Dendritic cell treated with granulocyte-macrophage colony-stimulating factor and Interleukin-4, amounts not matched to agents 40 ng/mL and 50 ng/mL, for 4 days (primary cell): ENCODE measurements at regions of chr5 and their contacts with region 1.

Region 1: GRCh38 chr5:90866333-90866732 is 307.7 kb downstream of the ADGRV1 start:
- H3K4me3 Mint-ChIP-seq: no peak overlapping the region
- H3K27ac Mint-ChIP-seq: no peak overlapping the region
- H3K4me1 Mint-ChIP-seq: no peaks in the 10 kb centered on the region
- H3K27me3 Mint-ChIP-seq: no peaks in the 10 kb centered on the region

Region 2: DNA sequence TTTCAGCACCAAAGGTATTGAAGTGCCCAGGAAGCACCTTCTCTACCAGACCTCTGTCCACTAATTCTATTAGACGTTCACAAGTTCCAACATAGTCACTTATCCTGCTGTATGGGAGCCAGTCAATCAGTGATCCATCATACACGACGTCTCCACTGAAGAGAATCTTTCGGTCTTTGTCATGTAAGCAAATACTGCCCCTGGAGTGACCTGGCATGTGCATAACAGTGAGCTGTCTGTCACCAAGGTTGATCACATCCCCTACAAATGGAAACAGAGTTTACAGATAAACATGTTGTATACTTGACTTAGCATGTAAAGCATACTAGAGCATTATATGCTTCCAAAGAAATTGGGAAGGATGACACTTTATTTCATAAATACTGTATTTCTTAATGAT is 405.0 kb before region 1 on chr5:
- intact Hi-C with region 1: no loop called
- H3K4me3 Mint-ChIP-seq: no peak overlapping the region
- H3K27ac Mint-ChIP-seq: no peak overlapping the region
- H3K4me1 Mint-ChIP-seq: no peaks in the 10 kb centered on the region
- H3K27me3 Mint-ChIP-seq: no peaks in the 10 kb centered on the region

Region 3: GRCh38 chr5:90932052-90932699 is 65.8 kb after region 1 on chr5:
- intact Hi-C with region 1: loop called (anchors 2 kb)
- H3K4me3 Mint-ChIP-seq: no peak overlapping the region
- H3K27ac Mint-ChIP-seq: no peak overlapping the region
- H3K4me1 Mint-ChIP-seq: no peaks in the 10 kb centered on the region
- H3K27me3 Mint-ChIP-seq: peaks cover 3% of the 10 kb centered on the region

Region 4: GRCh38 chr5:90983148-90983547 is 116.8 kb after region 1 on chr5:
- intact Hi-C with region 1: no loop called
- H3K4me3 Mint-ChIP-seq: no peak overlapping the region
- H3K27ac Mint-ChIP-seq: no peak overlapping the region
- H3K4me1 Mint-ChIP-seq: no peaks in the 10 kb centered on the region
- H3K27me3 Mint-ChIP-seq: no peaks in the 10 kb centered on the region